Transverse colon (tissue), 4 donors: ENCODE measurements at regions of chr6 and their contacts with region 1.

Region 1: GRCh38 chr6:130848945-130849344 is 21.7 kb downstream of the SMLR1 start:
- DNase-seq: no peak
- H3K4me3 ChIP-seq: no peak overlapping the region
- H3K27ac ChIP-seq: no peak overlapping the region
- H3K4me1 ChIP-seq: peaks cover 0 to 4% (median 0%) of the 10 kb centered on the region in 4 donors
- H3K27me3 ChIP-seq: no peaks in the 10 kb centered on the region
- CTCF ChIP-seq: no peak
- EP300 ChIP-seq: no peak
- POLR2A ChIP-seq: no peak

Region 2: DNA sequence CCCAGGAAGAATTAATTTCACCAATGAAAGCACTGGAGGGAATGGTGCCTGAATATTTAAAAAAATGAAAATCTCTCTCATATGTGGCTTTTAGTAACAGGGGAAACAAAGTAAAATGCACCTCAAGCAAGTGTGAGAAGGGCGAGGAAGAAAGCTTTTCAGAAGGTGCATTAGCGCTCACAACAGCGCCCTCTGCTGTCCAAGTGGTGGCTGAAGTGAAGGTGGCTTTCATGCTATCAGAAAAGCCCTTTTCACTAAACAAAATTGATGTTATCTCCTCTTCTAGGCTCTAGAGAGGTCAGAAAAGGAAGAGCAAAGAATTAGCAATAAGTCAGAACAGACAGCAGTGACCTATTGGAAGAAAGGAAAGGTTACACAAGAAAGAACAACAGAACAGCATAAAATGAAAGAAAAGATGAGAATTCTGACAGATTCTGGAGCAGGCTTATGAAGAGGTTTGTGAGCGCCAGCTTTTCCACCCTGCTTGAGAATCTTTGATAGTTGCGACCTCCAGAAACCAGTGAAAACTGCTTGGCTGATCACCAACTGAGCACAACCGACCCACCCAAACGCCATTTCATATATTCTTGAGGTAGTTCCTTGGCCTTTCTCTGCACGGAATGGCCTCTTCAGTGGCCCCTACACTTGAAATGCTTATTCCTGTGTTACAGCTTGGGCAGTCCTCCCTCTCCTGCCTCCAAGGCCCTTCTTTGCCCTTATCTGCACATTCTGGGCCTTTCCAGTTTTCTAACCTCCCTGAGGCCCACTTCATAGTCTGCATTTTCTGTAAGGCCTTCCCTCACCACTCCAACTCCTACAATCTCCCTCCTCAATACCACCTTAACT is 23.5 kb after region 1 on chr6:
- in situ Hi-C with region 1: no loop called
- intact Hi-C with region 1: loop called (anchors 1 kb)
- DNase-seq: peak; percentile 78
- H3K4me3 ChIP-seq: no peak overlapping the region
- H3K27ac ChIP-seq: no peak overlapping the region
- H3K4me1 ChIP-seq: no peaks in the 10 kb centered on the region
- H3K27me3 ChIP-seq: no peaks in the 10 kb centered on the region
- CTCF ChIP-seq: peak; percentile 65 to 92 (median 86)
- EP300 ChIP-seq: no peak
- POLR2A ChIP-seq: no peak